MCF 10A (cell line): ENCODE measurements at regions of chr7 and their contacts with region 1.

Region 1: DNA sequence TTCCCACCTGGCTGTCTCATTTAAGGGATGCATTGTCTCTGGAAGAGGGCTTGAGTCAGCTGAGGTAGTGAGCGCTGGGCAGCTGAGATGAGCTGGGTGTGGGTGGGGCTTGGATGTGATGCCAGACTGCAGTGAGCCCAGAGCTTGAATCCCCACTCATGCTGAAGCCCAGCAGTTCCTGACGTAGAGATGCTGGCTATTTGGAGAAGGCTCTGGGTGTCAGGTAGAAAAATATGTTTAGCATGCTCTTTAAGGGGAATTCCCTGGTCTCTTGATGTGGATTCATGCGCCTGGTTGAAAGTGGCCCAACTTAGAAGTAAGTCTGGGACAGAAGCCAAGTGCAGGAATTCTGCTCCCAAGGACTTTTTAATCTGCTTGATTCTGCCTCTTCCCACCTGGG is 241.5 kb upstream of the IGFBP3 start:
- DNase-seq: peak; percentile 41
- H3K4me3 Mint-ChIP-seq: no peak overlapping the region
- H3K27ac Mint-ChIP-seq: no peak overlapping the region
- H3K4me1 Mint-ChIP-seq: peaks cover 37% of the 10 kb centered on the region
- H3K27me3 Mint-ChIP-seq: no peaks in the 10 kb centered on the region
- CTCF ChIP-seq: no peak

Region 2: DNA sequence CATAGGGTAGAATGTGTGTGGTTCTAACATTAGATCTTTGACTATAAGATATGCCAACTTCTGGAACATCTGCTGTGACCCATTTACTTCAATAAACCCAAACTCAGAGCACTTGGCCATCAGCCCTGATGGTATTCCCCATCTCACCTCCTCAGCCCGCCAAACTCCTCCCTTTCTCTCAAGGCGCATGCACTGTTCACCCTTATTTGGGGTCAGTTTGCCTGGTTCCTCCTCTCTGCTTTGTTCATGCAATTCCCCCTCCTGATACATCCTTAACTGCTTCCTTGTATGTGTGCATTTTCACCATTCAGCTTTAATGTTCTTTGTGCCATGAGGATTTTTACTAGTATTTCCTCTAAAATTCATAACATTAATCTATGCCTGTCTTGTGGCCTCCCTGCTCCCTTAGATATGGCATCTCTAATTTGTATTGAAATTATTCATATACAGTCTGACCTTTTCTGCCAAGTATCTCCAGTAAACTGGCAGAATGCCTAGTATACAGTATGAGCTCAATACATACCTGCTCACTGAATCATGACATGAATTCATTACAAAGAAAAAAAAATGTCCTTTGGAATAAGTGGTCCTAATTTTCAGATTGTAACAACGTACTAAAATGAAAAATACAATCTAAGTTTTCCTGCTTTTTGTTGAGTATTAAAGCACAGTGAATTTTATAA is 95.3 kb after region 1 on chr7:
- CTCF ChIA-PET with region 1: no interaction called
- POLR2A ChIA-PET with region 1: interaction called, 4 read pairs
- intact Hi-C with region 1: loop called (anchors 10 kb)
- DNase-seq: peak; percentile 79
- H3K4me3 Mint-ChIP-seq: no peak overlapping the region
- H3K27ac Mint-ChIP-seq: peak overlapping the region; percentile 18
- H3K4me1 Mint-ChIP-seq: peaks cover 20% of the 10 kb centered on the region
- H3K27me3 Mint-ChIP-seq: no peaks in the 10 kb centered on the region
- CTCF ChIP-seq: no peak